ENCODE measurements at regions of chr4 and their contacts with region 1.

Region 1: GRCh38 chr4:147846318-147847155 is 114.6 kb downstream of the ARHGAP10 start:
- DNase-seq: no peak
- ATAC-seq: peak; percentile 60
- H3K4me3 ChIP-seq: no peak overlapping the region
- H3K4me3 Mint-ChIP-seq: no peak overlapping the region
- H3K27ac ChIP-seq: no peak overlapping the region
- H3K27ac Mint-ChIP-seq: no peak overlapping the region
- H3K4me1 ChIP-seq: peaks cover 0 to 3% of the 10 kb centered on the region in 2 donors
- H3K4me1 Mint-ChIP-seq: no peaks in the 10 kb centered on the region
- H3K27me3 ChIP-seq: no peaks in the 10 kb centered on the region
- H3K27me3 Mint-ChIP-seq: peaks cover 0 to 11% (median 0%) of the 10 kb centered on the region in 5 donors

Region 2: GRCh38 chr4:147799986-147800555 is 46.5 kb before region 1 on chr4:
- CTCF ChIA-PET with region 1: no interaction called
- POLR2A ChIA-PET with region 1: no interaction called
- intact Hi-C with region 1: loop called in 1 of 2 experiments (anchors 1 kb)
- DNase-seq: peak in 8 of 9 donors; percentile 5 to 64 (median 24)
- ATAC-seq: peak; percentile 95
- H3K4me3 ChIP-seq: no peak overlapping the region
- H3K4me3 Mint-ChIP-seq: peak overlapping the region in 2 of 10 donors; percentile 40 to 81
- H3K27ac ChIP-seq: no peak overlapping the region
- H3K27ac Mint-ChIP-seq: peak overlapping the region in 5 of 9 donors; percentile 22 to 79 (median 45)
- H3K4me1 ChIP-seq: peaks cover 7 to 15% of the 10 kb centered on the region in 2 donors
- H3K4me1 Mint-ChIP-seq: peaks cover 9 to 53% (median 12%) of the 10 kb centered on the region in 7 donors
- H3K27me3 ChIP-seq: no peaks in the 10 kb centered on the region
- H3K27me3 Mint-ChIP-seq: peaks cover 3 to 27% (median 7%) of the 10 kb centered on the region in 5 donors

Region 3: GRCh38 chr4:147984065-147984777 is 137.7 kb after region 1 on chr4:
- CTCF ChIA-PET with region 1: no interaction called
- POLR2A ChIA-PET with region 1: no interaction called
- intact Hi-C with region 1: no loop called
- DNase-seq: peak in 5 of 9 donors; percentile 7 to 30 (median 9)
- ATAC-seq: peak; percentile 60
- H3K4me3 ChIP-seq: no peak overlapping the region
- H3K4me3 Mint-ChIP-seq: no peak overlapping the region
- H3K27ac ChIP-seq: no peak overlapping the region
- H3K27ac Mint-ChIP-seq: no peak overlapping the region
- H3K4me1 ChIP-seq: peaks cover 0 to 4% of the 10 kb centered on the region in 2 donors
- H3K4me1 Mint-ChIP-seq: peaks cover 0 to 12% (median 0%) of the 10 kb centered on the region in 7 donors
- H3K27me3 ChIP-seq: no peaks in the 10 kb centered on the region
- H3K27me3 Mint-ChIP-seq: no peaks in the 10 kb centered on the region

Measured in naive thymus-derived CD4-positive, alpha-beta T cell (primary cell).